Colonic mucosa (tissue), 4 donors: ENCODE measurements at regions of chr12 and their contacts with region 1.

Region 1: GRCh38 chr12:53198486-53199110 is 8.5 kb downstream of the ITGB7 start:
- DNase-seq: no peak
- H3K4me3 ChIP-seq: no peak overlapping the region
- H3K27ac ChIP-seq: no peak overlapping the region
- H3K4me1 ChIP-seq: peaks cover 15% of the 10 kb centered on the region
- H3K27me3 ChIP-seq: no peaks in the 10 kb centered on the region
- CTCF ChIP-seq: no peak

Region 2: DNA sequence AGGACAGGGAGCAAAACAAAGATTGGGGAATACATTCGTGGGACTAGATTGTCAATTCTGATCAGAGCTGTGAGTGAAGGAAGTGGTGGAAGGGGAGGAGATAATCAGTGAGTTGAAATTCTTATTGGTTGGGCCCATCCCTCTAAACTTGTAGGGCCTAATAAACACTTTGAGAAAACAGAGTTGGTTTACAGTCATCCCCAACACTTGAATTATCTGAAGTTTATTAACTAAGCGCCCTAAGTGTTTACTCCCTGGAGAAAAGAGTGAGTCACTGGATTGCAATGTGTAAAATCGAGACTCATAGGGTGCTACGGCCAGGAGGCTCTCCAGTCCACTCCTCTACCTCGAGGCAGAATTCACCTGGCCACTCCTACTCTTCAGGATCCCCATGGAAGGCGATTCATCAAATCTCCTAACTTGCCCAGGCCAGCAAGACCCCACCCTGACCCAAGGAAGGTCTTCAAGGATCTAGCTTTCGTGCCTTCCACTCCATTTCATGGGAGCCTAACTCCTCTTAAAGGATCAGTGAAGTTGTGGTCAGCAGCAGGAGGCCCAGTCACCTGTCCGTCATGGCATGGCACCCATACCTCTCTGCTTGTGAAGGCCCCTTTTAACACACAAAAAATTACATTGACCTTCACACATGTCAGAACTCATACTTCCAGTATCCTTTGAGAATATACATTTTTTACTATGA is 399.4 kb before region 1 on chr12:
- intact Hi-C with region 1: no loop called
- DNase-seq: no peak
- H3K4me3 ChIP-seq: no peak overlapping the region
- H3K27ac ChIP-seq: no peak overlapping the region
- H3K4me1 ChIP-seq: no peaks in the 10 kb centered on the region
- H3K27me3 ChIP-seq: no peaks in the 10 kb centered on the region
- CTCF ChIP-seq: no peak

Region 3: GRCh38 chr12:53025250-53025649 is 173.3 kb before region 1 on chr12:
- intact Hi-C with region 1: no loop called
- DNase-seq: no peak
- H3K4me3 ChIP-seq: no peak overlapping the region
- H3K27ac ChIP-seq: no peak overlapping the region
- H3K4me1 ChIP-seq: no peaks in the 10 kb centered on the region
- H3K27me3 ChIP-seq: no peaks in the 10 kb centered on the region
- CTCF ChIP-seq: no peak

Region 4: DNA sequence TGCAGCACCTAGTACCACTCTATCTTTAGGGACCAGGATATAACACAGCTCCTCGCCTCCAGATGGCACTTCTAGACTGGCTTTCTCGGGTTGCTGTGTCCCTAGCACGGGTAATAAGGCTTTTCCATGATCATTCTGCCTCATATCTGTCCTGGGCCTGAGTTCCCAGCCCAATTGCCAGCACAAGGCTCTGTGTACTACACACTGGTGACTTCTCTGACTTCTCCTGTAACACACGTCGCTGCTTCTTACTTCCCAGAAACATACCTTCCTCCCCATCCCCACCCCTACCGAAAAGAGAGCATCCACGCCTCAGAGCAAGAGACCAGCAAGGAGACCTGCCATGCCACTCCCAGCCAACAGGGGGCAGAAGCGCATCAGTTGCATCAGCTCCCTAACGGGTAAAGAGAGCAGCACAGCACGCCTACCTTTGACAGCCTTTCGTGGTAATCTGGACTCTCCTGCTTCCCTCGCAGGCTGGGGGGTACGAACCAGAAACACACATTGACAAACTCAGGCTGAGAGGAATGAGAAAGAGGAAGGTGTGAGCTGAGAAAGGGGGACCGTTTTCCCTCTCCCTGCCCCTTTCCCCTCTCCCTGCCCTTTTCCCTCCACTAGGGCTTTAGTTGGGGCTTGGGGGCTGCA is 39.3 kb before region 1 on chr12:
- intact Hi-C with region 1: loop called (anchors 2 kb)
- DNase-seq: peak; percentile 91
- H3K4me3 ChIP-seq: no peak overlapping the region
- H3K27ac ChIP-seq: no peak overlapping the region
- H3K4me1 ChIP-seq: no peaks in the 10 kb centered on the region
- H3K27me3 ChIP-seq: no peaks in the 10 kb centered on the region
- CTCF ChIP-seq: peak; percentile 95